Endothelial cell of umbilical vein (primary cell): ENCODE measurements at regions of chr5 and their contacts with region 1.

Region 1: GRCh38 chr5:28156981-28157380 is 1118.6 kb upstream of the CDH9 start:
- DNase-seq: peak; percentile 72
- H3K4me3 ChIP-seq: peak overlapping the region in 2 of 3 experiments; percentile 37 to 83
- H3K27ac ChIP-seq: peak overlapping the region; percentile 92
- H3K4me1 ChIP-seq: peaks cover 17% of the 10 kb centered on the region
- H3K27me3 ChIP-seq: no peaks in the 10 kb centered on the region
- CTCF ChIP-seq: no peak
- POLR2A ChIP-seq: no peak

Region 2: GRCh38 chr5:27810458-27810857 is 346.5 kb before region 1 on chr5:
- CTCF ChIA-PET with region 1: no interaction called
- POLR2A ChIA-PET with region 1: no interaction called
- dilution Hi-C with region 1: no loop called
- intact Hi-C with region 1: loop called (anchors 2 kb)
- DNase-seq: peak; percentile 61
- H3K4me3 ChIP-seq: peak overlapping the region in 1 of 3 experiments; percentile 11
- H3K27ac ChIP-seq: no peak overlapping the region
- H3K4me1 ChIP-seq: peaks cover 7% of the 10 kb centered on the region
- H3K27me3 ChIP-seq: no peaks in the 10 kb centered on the region
- CTCF ChIP-seq: no peak
- POLR2A ChIP-seq: no peak

Region 3: DNA sequence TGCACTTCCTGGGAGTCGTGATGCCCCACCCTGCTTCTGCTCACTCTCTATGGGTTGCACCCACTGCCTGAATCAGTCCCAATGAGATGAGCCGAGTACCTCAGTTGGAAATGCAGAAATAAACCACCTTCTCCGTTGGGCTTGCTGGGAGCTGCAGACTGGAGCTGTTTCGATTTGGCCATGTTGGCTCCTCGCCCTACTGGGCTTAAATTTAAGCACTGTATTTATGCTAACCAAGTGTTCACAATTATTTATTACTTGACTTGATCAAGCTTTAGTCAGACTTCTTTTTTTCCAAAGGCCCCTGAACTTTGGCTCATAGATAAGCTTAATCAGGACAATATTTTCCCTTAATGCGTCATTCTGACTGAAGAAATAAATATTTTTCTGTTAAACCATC is 46.2 kb before region 1 on chr5:
- CTCF ChIA-PET with region 1: no interaction called
- POLR2A ChIA-PET with region 1: no interaction called
- dilution Hi-C with region 1: no loop called
- intact Hi-C with region 1: no loop called
- DNase-seq: no peak
- H3K4me3 ChIP-seq: no peak overlapping the region
- H3K27ac ChIP-seq: no peak overlapping the region
- H3K4me1 ChIP-seq: no peaks in the 10 kb centered on the region
- H3K27me3 ChIP-seq: no peaks in the 10 kb centered on the region
- CTCF ChIP-seq: no peak
- POLR2A ChIP-seq: no peak

Region 4: GRCh38 chr5:28249771-28250415 is 92.9 kb after region 1 on chr5:
- CTCF ChIA-PET with region 1: no interaction called
- POLR2A ChIA-PET with region 1: no interaction called
- dilution Hi-C with region 1: no loop called
- intact Hi-C with region 1: no loop called
- DNase-seq: no peak
- H3K4me3 ChIP-seq: no peak overlapping the region
- H3K27ac ChIP-seq: no peak overlapping the region
- H3K4me1 ChIP-seq: no peaks in the 10 kb centered on the region
- H3K27me3 ChIP-seq: no peaks in the 10 kb centered on the region
- CTCF ChIP-seq: no peak
- POLR2A ChIP-seq: no peak

Region 5: GRCh38 chr5:28313935-28314334 is 157.0 kb after region 1 on chr5:
- CTCF ChIA-PET with region 1: no interaction called
- POLR2A ChIA-PET with region 1: no interaction called
- dilution Hi-C with region 1: no loop called
- intact Hi-C with region 1: loop called (anchors 1 kb)
- DNase-seq: no peak
- H3K4me3 ChIP-seq: no peak overlapping the region
- H3K27ac ChIP-seq: peak overlapping the region; percentile 57
- H3K4me1 ChIP-seq: peaks cover 5% of the 10 kb centered on the region
- H3K27me3 ChIP-seq: no peaks in the 10 kb centered on the region
- CTCF ChIP-seq: no peak
- POLR2A ChIP-seq: no peak

Region 6: DNA sequence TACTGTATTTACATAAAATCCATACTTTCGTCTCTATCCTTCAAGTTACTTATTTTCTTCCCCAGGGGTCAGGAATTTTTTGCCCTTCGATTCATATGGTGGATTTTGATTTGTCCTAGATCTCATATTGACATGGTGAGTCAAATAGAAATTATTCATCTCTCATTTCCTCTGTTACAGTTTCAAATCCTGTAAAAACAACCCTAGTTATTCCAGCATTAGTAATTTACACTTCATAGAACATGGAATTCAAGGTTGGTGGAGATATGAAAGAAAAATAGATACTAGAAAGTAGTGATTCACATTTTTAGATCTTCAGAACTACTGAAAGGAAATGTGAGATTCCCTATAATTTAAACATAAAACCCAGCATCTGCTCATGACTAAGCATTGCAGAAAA is 212.4 kb after region 1 on chr5:
- CTCF ChIA-PET with region 1: no interaction called
- POLR2A ChIA-PET with region 1: no interaction called
- dilution Hi-C with region 1: no loop called
- intact Hi-C with region 1: loop called (anchors 2 kb)
- DNase-seq: no peak
- H3K4me3 ChIP-seq: no peak overlapping the region
- H3K27ac ChIP-seq: no peak overlapping the region
- H3K4me1 ChIP-seq: no peaks in the 10 kb centered on the region
- H3K27me3 ChIP-seq: no peaks in the 10 kb centered on the region
- CTCF ChIP-seq: no peak
- POLR2A ChIP-seq: no peak